Activated CD4-positive, alpha-beta T cell treated with anti-CD3 and anti-CD28 coated beads, Interleukin-2, amount 10 ng/mL, durations not matched to agents 7 days and 5 days (primary cell): ENCODE measurements at regions of chr3 and their contacts with region 1.

Region 1: DNA sequence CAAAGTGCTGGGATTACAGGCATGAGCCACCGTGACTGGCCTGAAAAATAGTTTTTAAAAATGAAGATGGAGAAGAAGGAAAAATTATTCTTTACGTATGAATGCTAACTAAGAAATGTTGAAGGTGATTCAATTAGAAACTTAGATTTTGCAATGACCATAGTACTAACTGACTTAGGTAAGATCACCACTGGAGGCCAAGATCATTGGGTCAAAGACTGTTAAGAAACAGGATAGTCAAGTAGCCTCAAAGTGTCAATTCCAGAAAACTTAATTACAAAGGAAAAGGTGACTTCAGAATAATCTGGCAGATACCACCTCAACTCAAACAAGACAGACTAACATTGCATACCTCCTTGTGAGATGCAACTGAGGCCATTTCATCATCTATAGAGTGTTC is 119.3 kb downstream of the FRMD4B start:
- DNase-seq: no peak
- H3K4me3 Mint-ChIP-seq: no peak overlapping the region
- H3K27ac Mint-ChIP-seq: no peak overlapping the region
- H3K4me1 Mint-ChIP-seq: no peaks in the 10 kb centered on the region
- H3K27me3 Mint-ChIP-seq: no peaks in the 10 kb centered on the region

Region 2: DNA sequence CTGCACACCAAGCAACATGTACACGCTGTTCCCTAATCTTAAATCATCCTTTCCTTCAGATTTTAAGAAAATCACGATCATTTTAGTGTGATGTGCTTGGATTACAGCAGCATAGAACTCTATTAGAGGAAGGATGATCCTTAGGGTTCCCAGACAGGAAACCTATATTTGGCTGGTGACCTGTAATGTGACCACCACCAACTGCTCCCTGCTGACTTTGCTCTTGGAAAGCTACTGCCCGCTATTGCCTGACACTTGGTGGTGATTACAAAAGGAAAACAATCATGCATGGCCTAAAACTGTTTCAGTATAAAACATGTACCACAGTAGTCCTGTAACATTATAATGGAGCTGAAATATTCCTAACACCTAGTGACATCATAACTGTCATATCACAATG is 117.0 kb before region 1 on chr3:
- CTCF ChIA-PET with region 1: no interaction called
- POLR2A ChIA-PET with region 1: interaction called, 11 read pairs
- DNase-seq: no peak
- H3K4me3 Mint-ChIP-seq: no peak overlapping the region
- H3K27ac Mint-ChIP-seq: no peak overlapping the region
- H3K4me1 Mint-ChIP-seq: no peaks in the 10 kb centered on the region
- H3K27me3 Mint-ChIP-seq: peaks cover 9% of the 10 kb centered on the region

Region 3: DNA sequence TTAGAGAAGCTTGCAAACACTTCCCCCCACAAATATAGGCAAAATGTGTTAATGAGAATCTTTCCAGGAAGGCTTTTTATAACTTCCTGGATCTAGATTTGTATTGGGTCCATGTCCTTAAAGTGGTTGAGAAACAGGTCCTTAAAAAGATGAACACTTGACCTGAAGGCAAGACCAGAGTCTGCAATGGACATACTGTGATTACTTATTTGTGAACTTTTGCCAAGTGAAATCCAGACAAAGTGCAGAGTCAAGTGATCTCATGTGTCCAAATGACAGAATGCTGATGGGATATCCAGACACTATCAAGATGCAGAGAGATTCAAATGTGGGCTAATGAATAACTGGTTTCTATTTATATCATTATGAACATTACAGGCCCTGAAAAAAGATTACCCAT is 75.5 kb after region 1 on chr3:
- CTCF ChIA-PET with region 1: no interaction called
- POLR2A ChIA-PET with region 1: no interaction called
- DNase-seq: no peak
- H3K4me3 Mint-ChIP-seq: no peak overlapping the region
- H3K27ac Mint-ChIP-seq: no peak overlapping the region
- H3K4me1 Mint-ChIP-seq: no peaks in the 10 kb centered on the region
- H3K27me3 Mint-ChIP-seq: peaks cover 6% of the 10 kb centered on the region